ENCODE measurements at regions of chr21 and their contacts with region 1.

Region 1: GRCh38 chr21:34073032-34073869 is at the starts of genes MRPS6 and SLC5A3:
- DNase-seq: peak; percentile 87 to 92
- ATAC-seq: peak; percentile 86 to 89 (median 88)
- H3K4me3 ChIP-seq: peak within 1 kb of the TSS; percentile 83
- H3K27ac ChIP-seq: peak within 1 kb of the TSS; percentile 79
- H3K4me1 ChIP-seq: peaks cover 39% of the 10 kb centered on the region
- H3K27me3 ChIP-seq: no peaks in the 10 kb centered on the region
- CTCF ChIP-seq: no peak
- total RNA-seq, gene MRPS6: 38.8 to 92.9 (median 76.7) TPM
- total RNA-seq, gene SLC5A3: 2.6 to 12.8 (median 6.7) TPM

Region 2: GRCh38 chr21:33151941-33152731 is 921.1 kb before region 1 on chr21:
- intact Hi-C with region 1: no loop called
- DNase-seq: no peak
- ATAC-seq: no peak
- H3K4me3 ChIP-seq: no peak overlapping the region
- H3K27ac ChIP-seq: no peak overlapping the region
- H3K4me1 ChIP-seq: no peaks in the 10 kb centered on the region
- H3K27me3 ChIP-seq: peaks cover 0 to 40% (median 4%) of the 10 kb centered on the region in 3 donors
- CTCF ChIP-seq: no peak

Region 3: DNA sequence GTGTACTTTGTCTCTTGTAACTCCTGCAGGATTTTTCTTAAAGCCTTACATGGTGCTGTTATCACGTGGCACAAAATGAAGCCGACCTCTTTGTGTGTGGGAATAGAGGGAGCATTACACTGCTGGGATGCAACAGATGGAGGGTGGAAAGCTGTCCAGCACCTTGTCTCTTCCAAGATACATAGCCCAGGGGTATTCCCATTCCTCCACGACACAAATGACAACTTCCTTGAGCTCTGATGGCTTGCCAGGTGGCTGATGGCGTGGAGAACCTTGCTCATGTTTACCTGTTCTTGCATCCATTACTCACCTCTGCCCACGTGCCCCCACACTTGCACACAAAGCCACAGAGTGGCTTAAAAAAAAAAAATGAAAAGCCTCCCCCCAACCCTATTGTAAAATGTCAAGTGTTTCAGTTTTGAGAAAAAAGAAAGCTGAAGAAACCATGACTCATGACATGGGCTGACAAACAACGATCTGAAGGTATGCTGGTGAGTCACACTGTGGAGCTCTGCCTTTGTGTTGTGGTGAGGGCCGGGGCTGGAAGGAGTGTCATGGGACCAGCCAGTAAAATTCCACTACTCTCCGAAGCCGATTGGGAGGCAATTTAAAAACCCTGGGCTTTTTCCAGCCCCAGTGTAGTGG is 125.7 kb before region 1 on chr21:
- intact Hi-C with region 1: loop called in 1 of 2 experiments (anchors 10 kb)
- DNase-seq: peak; percentile 77 to 81
- ATAC-seq: peak; percentile 91 to 97 (median 94)
- H3K4me3 ChIP-seq: peak overlapping the region; percentile 33
- H3K27ac ChIP-seq: peak overlapping the region; percentile 78
- H3K4me1 ChIP-seq: peaks cover 13% of the 10 kb centered on the region
- H3K27me3 ChIP-seq: no peaks in the 10 kb centered on the region
- CTCF ChIP-seq: no peak

Region 4: DNA sequence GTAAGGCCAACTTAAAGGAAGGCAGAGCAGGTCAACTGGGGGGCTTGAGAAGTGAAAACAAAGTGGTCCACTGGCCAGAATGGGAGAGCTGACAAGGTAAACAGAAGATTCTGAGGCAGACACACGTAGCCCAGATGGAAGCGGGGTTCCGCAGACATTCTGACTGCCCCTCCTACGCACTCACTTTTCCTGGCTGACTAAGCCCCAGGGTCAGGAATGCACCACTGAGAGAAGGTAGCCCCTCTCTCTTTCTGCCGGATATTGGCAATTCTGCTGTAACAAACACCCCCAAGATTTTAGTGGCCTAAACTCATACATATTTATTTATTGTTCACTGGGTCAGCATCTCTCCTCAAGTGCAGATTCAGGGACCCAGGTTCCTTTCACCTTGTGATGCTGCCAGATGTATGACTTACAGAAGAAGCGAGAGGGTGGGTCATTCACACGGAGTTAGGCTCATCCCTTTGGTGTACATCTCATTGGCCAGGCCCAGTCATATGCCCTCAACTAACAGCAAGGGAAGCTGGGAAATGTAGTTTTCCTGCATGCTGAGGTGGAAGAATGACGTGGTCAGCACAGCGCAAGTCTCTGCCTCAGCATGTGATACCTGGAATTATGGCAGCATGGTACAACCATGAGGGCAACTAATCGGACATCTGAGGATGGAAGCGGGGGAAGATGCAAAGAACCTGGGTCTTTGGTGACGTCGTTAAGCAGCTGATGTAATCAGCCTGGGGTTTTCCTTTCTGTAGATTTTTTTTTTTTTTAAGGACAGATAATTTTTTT is 43.3 kb before region 1 on chr21:
- intact Hi-C with region 1: loop called in 1 of 2 experiments (anchors 5 kb)
- DNase-seq: peak in 1 of 2 donors; percentile 20
- ATAC-seq: peak; percentile 98 to 100 (median 99)
- H3K4me3 ChIP-seq: peak overlapping the region; percentile 40
- H3K27ac ChIP-seq: no peak overlapping the region
- H3K4me1 ChIP-seq: no peaks in the 10 kb centered on the region
- H3K27me3 ChIP-seq: no peaks in the 10 kb centered on the region
- CTCF ChIP-seq: no peak

Region 5: DNA sequence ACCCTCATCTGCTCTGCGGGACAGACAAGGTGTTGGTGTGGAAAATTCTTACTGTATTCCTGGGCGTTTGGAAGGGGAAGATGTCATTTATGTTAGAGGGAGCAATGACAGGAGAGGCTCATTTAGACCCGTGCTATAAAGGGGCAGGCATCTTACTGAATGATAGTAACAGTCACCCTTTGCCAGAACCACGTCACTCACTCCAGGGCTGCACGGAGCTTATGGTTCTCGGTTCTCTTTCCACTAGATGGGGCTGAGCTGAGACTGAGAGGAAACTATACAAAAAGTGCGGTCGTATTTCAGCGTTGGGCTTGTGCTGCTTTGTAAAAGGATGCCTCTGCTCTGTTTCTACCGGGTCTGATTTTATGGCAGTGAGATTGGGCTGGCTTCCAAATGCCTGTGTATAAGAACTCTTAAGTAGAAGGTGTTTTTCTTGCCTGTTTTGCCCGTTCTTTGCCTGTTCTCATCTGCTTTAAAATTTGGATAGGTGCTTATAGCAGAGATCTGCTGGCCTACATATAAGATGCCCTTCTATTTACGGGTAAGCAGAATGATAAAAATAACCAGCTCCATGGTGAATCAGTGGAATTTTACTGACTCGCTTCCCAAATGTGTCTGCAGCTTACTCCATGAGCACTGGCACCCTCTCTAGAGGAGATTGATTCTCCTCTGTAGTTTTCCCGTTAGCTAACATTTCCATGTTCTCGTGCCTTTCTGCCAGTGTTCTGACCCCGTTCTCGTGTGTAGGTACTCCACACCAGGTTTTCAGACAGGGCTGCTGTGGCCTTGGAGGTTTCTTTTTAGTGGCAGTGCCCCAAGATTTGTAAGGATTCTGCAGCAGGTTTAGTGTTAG is 56.0 kb after region 1 on chr21:
- intact Hi-C with region 1: loop called in 1 of 2 experiments (anchors 5 kb)
- DNase-seq: peak; percentile 55 to 67
- ATAC-seq: peak; percentile 75 to 83 (median 79)
- H3K4me3 ChIP-seq: peak overlapping the region; percentile 50
- H3K27ac ChIP-seq: peak overlapping the region; percentile 85
- H3K4me1 ChIP-seq: peaks cover 69% of the 10 kb centered on the region
- H3K27me3 ChIP-seq: no peaks in the 10 kb centered on the region
- CTCF ChIP-seq: peak; percentile 39

Region 6: DNA sequence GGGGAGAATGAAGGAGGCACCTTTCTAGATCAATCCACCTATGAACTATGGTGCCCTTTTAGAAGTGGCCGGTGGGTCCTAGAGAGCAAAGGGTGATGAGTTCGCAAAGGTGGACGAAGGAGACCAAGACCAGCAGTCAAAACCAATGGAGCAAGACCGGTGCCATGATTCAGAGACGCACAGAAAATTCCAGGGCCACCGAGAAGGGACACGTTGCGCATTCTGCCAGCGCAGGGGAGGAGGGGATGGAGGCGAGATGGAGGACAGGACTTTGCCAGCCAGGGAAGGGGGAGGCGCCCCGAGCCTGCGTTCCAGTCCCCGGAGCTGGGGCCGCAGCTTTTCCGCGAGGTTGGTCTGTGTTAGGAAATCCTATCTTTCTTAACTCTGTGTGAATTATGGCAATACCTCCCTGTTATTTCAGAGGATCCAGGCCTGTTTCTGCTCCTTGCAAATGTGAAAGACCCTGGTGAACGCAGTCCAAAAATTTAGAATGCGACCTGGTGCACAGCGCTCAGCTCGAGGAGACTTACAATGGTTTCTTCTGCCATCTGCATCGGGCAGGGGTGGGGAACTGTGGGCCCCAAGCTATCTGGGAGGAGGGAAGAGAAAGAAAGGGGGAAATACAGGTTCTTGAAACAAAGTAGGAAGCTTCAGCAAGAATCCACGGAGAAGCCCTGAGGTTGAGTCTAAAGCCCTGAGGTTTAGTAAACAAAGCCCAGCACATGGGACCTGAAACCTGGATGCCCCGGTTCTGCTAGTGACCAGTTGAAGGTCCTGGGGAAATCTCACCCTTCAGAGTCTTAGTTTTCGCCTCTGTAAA is 129.5 kb after region 1 on chr21:
- intact Hi-C with region 1: loop called in 1 of 2 experiments (anchors 2 kb)
- DNase-seq: peak; percentile 45 to 70
- ATAC-seq: peak in 3 of 4 donors; percentile 10 to 21 (median 19)
- H3K4me3 ChIP-seq: peak overlapping the region; percentile 16
- H3K27ac ChIP-seq: no peak overlapping the region
- H3K4me1 ChIP-seq: peaks cover 14% of the 10 kb centered on the region
- H3K27me3 ChIP-seq: no peaks in the 10 kb centered on the region
- CTCF ChIP-seq: no peak

Region 7: DNA sequence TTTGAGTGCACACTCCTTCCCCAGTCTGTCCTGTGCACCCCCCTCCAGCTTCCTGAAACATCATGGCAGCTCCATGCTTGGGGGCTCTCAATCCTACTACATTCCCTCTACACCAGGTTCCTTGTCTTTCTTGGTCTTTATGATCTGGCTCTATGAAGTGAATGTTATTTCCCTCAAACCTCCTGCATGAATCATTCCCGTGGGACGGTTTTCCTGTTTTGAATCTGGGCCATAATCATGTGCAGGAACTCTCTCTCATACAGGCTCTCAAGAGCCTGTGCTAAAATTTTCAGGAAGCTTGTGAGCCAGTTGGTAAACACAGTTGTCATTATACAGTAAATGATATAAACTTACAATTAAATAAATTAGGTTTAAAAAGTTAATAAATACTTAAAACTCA is 200.8 kb after region 1 on chr21:
- intact Hi-C with region 1: no loop called
- DNase-seq: no peak
- ATAC-seq: no peak
- H3K4me3 ChIP-seq: no peak overlapping the region
- H3K27ac ChIP-seq: no peak overlapping the region
- H3K4me1 ChIP-seq: no peaks in the 10 kb centered on the region
- H3K27me3 ChIP-seq: no peaks in the 10 kb centered on the region
- CTCF ChIP-seq: no peak

Region 8: DNA sequence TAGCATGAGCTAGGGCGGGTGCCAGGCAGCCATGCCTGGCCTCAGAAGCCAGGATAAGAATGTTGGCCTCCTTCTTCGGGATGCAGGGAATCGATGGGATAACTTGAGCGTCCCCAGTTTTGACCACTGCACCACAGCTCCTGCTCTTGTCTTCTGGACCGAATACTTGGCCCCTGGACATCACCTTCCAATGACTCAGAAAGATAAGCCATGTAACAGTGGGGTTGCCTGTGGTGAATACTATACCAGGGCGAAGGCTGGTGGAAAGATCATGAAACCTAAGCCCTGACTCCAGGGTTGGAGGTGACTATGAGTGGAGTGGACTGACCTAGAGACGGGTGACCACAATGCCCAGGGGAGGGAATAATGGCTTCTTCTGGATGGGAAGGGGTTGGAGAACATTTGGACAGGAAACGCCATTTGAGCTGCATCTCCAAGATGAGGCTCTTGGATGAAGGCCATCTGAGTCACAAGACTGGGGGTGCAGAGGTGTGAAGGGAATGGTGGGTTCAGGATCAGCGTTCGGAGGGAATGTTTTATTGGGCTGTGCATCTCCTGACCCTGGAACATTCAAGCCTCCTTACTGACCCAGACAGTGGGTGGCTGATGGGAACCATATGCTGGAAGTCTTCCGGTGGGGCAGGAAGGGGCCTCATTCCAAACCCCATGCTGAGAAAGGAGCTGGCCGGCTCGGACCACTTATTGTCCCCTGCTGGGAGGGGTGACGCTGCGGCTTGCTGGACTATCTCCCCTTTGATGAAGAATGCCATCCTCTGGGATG is 272.0 kb after region 1 on chr21:
- intact Hi-C with region 1: loop called in 1 of 2 experiments (anchors 5 kb)
- DNase-seq: no peak
- ATAC-seq: peak in 1 of 4 donors; percentile 5
- H3K4me3 ChIP-seq: no peak overlapping the region
- H3K27ac ChIP-seq: peak overlapping the region; percentile 47
- H3K4me1 ChIP-seq: peaks cover 10% of the 10 kb centered on the region
- H3K27me3 ChIP-seq: no peaks in the 10 kb centered on the region
- CTCF ChIP-seq: no peak

Measured in psoas muscle (tissue), 8 donors.